Activated CD8-positive, alpha-beta T cell treated with anti-CD3 and anti-CD28 coated beads for 36 hours (primary cell): ENCODE measurements at regions of chr1 and their contacts with region 1.

Region 1: GRCh38 chr1:45583264-45583665 is 576 bp upstream of the NASP start:
- DNase-seq: peak; percentile 96
- ATAC-seq: peak; percentile 83
- H3K4me3 Mint-ChIP-seq: peak overlapping the region; percentile 96
- H3K27ac Mint-ChIP-seq: peak overlapping the region; percentile 99
- H3K4me1 Mint-ChIP-seq: peaks cover 20% of the 10 kb centered on the region
- H3K27me3 Mint-ChIP-seq: no peaks in the 10 kb centered on the region
- CTCF ChIP-seq: no peak

Region 2: GRCh38 chr1:45490626-45491486 is 92.4 kb before region 1 on chr1 and contains the start of gene TESK2:
- CTCF ChIA-PET with region 1: interaction called, 11 read pairs
- POLR2A ChIA-PET with region 1: interaction called, 10 read pairs
- intact Hi-C with region 1: no loop called
- DNase-seq: peak; percentile 98
- ATAC-seq: peak; percentile 95
- H3K4me3 Mint-ChIP-seq: no peak within 1 kb of the TSS
- H3K27ac Mint-ChIP-seq: no peak within 1 kb of the TSS
- H3K4me1 Mint-ChIP-seq: peaks cover 11% of the 10 kb centered on the region
- H3K27me3 Mint-ChIP-seq: no peaks in the 10 kb centered on the region
- CTCF ChIP-seq: no peak
- total RNA-seq, gene TESK2: 2.9 to 3.7 TPM

Region 3: GRCh38 chr1:45543581-45544417 is 39.5 kb before region 1 on chr1:
- CTCF ChIA-PET with region 1: interaction called, 5 read pairs
- POLR2A ChIA-PET with region 1: interaction called, 14 read pairs
- intact Hi-C with region 1: no loop called
- DNase-seq: peak; percentile 83
- ATAC-seq: peak; percentile 90
- H3K4me3 Mint-ChIP-seq: peak overlapping the region; percentile 22
- H3K27ac Mint-ChIP-seq: peak overlapping the region; percentile 73
- H3K4me1 Mint-ChIP-seq: peaks cover 35% of the 10 kb centered on the region
- H3K27me3 Mint-ChIP-seq: peaks cover 1% of the 10 kb centered on the region
- CTCF ChIP-seq: no peak

Region 4: GRCh38 chr1:45557422-45557944 is 25.8 kb before region 1 on chr1:
- CTCF ChIA-PET with region 1: interaction called, 3 read pairs
- POLR2A ChIA-PET with region 1: interaction called, 12 read pairs
- intact Hi-C with region 1: no loop called
- DNase-seq: no peak
- ATAC-seq: no peak
- H3K4me3 Mint-ChIP-seq: no peak overlapping the region
- H3K27ac Mint-ChIP-seq: peak overlapping the region; percentile 71
- H3K4me1 Mint-ChIP-seq: peaks cover 30% of the 10 kb centered on the region
- H3K27me3 Mint-ChIP-seq: no peaks in the 10 kb centered on the region
- CTCF ChIP-seq: no peak

Region 5: GRCh38 chr1:45594412-45594811 is 11.1 kb after region 1 on chr1:
- CTCF ChIA-PET with region 1: interaction called, 3 read pairs
- POLR2A ChIA-PET with region 1: interaction called, 15 read pairs
- intact Hi-C with region 1: no loop called
- DNase-seq: no peak
- ATAC-seq: no peak
- H3K4me3 Mint-ChIP-seq: no peak overlapping the region
- H3K27ac Mint-ChIP-seq: no peak overlapping the region
- H3K4me1 Mint-ChIP-seq: peaks cover 19% of the 10 kb centered on the region
- H3K27me3 Mint-ChIP-seq: no peaks in the 10 kb centered on the region
- CTCF ChIP-seq: no peak

Region 6: DNA sequence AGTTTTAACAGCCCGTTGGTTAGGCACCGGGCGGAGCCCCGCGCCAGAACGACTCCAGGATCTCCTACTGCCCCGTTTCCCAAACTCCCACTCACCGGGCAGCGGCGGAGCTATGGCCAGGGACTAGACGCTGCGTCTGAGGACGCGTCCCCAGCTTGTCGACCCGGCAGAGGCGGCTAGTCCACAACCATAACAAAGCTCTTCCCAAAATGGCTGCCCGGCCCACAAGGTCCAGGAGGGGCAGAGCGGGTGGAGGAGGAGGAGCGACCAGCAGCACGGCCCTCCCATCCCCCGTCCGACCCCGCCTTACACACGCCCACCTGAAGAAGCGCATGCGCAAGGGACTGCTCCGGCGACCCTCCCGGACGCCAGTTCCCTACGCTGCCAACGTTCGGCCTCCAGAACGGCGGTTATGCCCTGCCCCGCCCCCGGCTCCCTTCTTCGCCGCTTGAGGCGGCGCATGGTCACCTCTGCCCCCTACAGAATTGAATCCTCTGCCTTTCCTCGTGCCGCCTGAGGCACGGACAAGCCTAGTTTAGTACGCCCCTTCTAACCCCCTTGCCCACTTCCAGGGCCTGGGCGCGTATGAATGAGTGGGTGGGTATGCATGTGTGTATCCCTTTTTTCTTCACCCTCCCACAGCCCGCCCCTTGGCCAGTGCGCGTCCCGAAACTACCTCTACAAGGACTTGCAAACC is 103.2 kb after region 1 on chr1 and contains the start of gene GPBP1L1:
- CTCF ChIA-PET with region 1: no interaction called
- POLR2A ChIA-PET with region 1: interaction called, 11 read pairs
- intact Hi-C with region 1: loop called (anchors 5 kb)
- DNase-seq: peak; percentile 98
- ATAC-seq: peak; percentile 78
- H3K4me3 Mint-ChIP-seq: peak within 1 kb of the TSS; percentile 91
- H3K27ac Mint-ChIP-seq: peak within 1 kb of the TSS; percentile 95
- H3K4me1 Mint-ChIP-seq: peaks cover 37% of the 10 kb centered on the region
- H3K27me3 Mint-ChIP-seq: no peaks in the 10 kb centered on the region
- CTCF ChIP-seq: no peak
- total RNA-seq, gene GPBP1L1: 95.7 to 105 TPM